ENCODE measurements at regions of chr11 and their contacts with region 1.

Region 1: GRCh38 chr11:131674051-131674755 is 303.8 kb downstream of the NTM start:
- DNase-seq: peak; percentile 51 to 92
- H3K4me3 ChIP-seq: no peak overlapping the region
- CTCF ChIP-seq: peak in 1 of 3 donors; percentile 56
- POLR2A ChIP-seq: no peak

Region 2: GRCh38 chr11:131064373-131064991 is 609.7 kb before region 1 on chr11:
- intact Hi-C with region 1: loop called (anchors 10 kb)
- DNase-seq: no peak
- H3K4me3 ChIP-seq: no peak overlapping the region
- CTCF ChIP-seq: peak in 1 of 3 donors; percentile 48
- POLR2A ChIP-seq: no peak